GM10248 (cell line): ENCODE measurements at regions of chr14 and their contacts with region 1.

Region 1: DNA sequence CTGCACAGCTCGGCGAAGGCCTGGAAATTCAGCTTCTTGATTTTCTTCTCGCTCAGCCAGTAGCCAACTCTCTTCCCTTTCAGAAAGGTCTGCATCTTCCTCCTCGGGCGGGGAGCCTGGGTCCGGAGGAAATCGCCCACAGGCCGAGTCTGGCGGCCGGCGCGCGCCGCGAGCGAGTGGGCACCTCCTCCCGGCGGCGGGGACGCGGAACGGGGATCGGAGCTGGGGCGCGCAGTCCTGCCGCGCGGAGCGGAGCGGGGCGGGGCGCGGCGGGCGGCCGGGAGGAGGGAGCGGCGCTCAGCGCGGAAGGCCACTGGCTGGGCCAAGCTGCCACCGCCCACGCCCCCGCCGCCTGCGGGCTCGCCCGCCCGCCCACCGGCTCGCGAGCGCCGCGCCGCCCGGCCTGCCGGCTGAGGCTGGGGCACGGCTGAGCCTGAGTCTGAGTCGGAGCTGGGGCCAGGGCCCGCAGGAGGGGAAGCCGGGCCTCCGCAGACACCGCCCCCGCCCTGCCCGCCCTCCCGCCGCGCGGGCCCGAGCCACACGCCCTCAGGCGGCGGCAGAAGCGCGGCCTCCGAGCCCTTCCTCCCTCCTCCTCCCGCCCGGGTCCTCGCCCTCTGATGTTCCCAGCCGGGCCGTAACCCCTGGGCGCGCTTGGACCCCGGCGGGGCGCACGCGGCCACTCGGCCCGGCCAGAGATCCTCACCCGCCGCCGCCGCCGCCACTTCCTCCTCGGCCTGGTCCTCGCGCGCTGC is 480 bp downstream of the ITPK1 start:
- DNase-seq: peak; percentile 88
- CTCF ChIP-seq: no peak

Region 2: GRCh38 chr14:92780444-92781232 is 334.6 kb before region 1 on chr14:
- CTCF ChIA-PET with region 1: no interaction called
- POLR2A ChIA-PET with region 1: no interaction called
- DNase-seq: no peak
- CTCF ChIP-seq: no peak

Region 3: GRCh38 chr14:93033983-93034670 is 81.1 kb before region 1 on chr14:
- CTCF ChIA-PET with region 1: interaction called, 26 read pairs
- POLR2A ChIA-PET with region 1: interaction called, 3 read pairs
- DNase-seq: peak; percentile 88
- CTCF ChIP-seq: peak; percentile 83

Region 4: GRCh38 chr14:93090826-93091555 is 24.3 kb before region 1 on chr14:
- CTCF ChIA-PET with region 1: interaction called, 76 read pairs
- POLR2A ChIA-PET with region 1: no interaction called
- DNase-seq: no peak
- CTCF ChIP-seq: no peak

Region 5: DNA sequence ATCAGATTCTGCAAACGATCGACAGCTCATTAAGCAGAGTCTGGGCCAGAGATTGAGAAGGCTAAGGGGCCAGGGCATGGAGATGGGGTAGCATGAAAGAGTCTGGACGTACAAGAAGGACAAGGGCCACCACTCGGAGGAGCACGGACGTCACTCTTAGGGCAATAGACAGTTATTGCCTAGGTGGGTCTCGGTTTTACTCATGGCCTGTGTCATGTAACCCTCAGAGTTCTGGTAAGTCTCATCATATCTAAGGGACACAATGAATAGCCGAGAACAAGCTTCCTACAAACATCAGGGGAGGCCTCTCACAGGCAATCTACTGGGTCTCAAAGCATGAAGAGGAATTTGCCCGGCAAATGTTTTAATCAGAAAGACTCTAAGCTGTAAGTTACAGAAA is 30.9 kb after region 1 on chr14:
- CTCF ChIA-PET with region 1: interaction called, 153 read pairs
- POLR2A ChIA-PET with region 1: interaction called, 4 read pairs
- DNase-seq: peak; percentile 39
- CTCF ChIP-seq: no peak

Region 6: GRCh38 chr14:93206793-93207467 is 91.7 kb after region 1 on chr14 and contains the starts of genes GON7 and UBR7:
- CTCF ChIA-PET with region 1: interaction called, 29 read pairs
- POLR2A ChIA-PET with region 1: no interaction called
- DNase-seq: peak; percentile 94
- CTCF ChIP-seq: peak; percentile 48